SK-N-SH (cell line): ENCODE measurements at regions of chr16 and their contacts with region 1.

Region 1: DNA sequence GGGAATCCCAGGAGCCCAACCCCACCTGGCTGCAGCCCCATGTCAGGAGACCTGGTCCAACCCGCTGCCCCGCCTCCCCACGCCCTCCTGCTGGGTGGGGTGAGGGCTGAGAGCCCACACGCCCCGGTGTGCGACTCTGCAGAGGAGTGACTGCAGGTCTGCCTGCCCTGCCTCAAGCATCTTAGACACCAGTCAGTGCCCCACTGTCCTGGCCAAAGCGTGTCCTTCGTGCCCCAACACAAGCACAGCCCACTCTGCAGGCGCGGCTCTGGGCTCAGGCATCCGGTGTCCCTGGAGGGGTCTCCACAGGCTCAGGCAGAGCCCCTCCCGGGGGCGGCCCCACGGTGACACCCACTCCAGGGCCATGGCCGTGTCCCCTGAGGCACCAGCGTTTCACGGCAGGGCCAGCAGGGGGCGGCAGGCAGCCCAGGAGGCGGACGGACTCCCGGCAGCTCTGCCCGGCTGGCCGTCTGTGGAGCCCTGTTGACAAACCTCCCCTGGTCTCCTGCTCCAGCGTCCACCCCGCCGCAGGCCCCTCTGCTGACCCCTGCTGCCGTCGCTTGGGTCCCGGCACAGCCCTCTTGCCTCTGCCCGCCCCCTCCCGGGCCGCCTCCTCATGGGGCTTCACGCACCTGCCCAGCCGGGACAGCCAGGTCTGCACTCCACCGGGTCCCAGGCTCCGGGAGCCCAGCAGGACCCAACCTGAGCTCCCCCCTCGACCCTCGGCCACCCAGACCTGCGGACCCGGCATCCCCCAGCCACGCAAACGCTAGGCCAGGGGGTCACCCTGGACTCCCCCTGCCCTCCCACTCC is 8.6 kb upstream of the UBE2I start:
- DNase-seq: peak; percentile 91
- H3K4me3 ChIP-seq: peak overlapping the region; percentile 23 to 45; a peak in 2 of 4 replicates
- H3K27ac ChIP-seq: no peak overlapping the region
- H3K4me1 ChIP-seq: 0 out of 4 replicates have a peak, but pooled peaks cover 0 to 3% of the 10 kb centered on the region in 2 experiments
- H3K27me3 ChIP-seq: peaks cover 17% of the 10 kb centered on the region; the same call in 1 of the 2 replicates
- CTCF ChIP-seq: peak; percentile 73
- EP300 ChIP-seq: no peak
- RAD21 ChIP-seq: peak; percentile 42

Region 2: GRCh38 chr16:1279945-1280589 is 20.8 kb before region 1 on chr16:
- CTCF ChIA-PET with region 1: interaction called, 15 read pairs
- POLR2A ChIA-PET with region 1: no interaction called
- DNase-seq: no peak
- H3K4me3 ChIP-seq: no peak overlapping the region
- H3K27ac ChIP-seq: no peak overlapping the region
- H3K4me1 ChIP-seq: no peaks in the 10 kb centered on the region; a peak in 1 of 4 replicates
- H3K27me3 ChIP-seq: peaks cover 86% of the 10 kb centered on the region
- CTCF ChIP-seq: no peak
- EP300 ChIP-seq: no peak
- RAD21 ChIP-seq: no peak

Region 3: DNA sequence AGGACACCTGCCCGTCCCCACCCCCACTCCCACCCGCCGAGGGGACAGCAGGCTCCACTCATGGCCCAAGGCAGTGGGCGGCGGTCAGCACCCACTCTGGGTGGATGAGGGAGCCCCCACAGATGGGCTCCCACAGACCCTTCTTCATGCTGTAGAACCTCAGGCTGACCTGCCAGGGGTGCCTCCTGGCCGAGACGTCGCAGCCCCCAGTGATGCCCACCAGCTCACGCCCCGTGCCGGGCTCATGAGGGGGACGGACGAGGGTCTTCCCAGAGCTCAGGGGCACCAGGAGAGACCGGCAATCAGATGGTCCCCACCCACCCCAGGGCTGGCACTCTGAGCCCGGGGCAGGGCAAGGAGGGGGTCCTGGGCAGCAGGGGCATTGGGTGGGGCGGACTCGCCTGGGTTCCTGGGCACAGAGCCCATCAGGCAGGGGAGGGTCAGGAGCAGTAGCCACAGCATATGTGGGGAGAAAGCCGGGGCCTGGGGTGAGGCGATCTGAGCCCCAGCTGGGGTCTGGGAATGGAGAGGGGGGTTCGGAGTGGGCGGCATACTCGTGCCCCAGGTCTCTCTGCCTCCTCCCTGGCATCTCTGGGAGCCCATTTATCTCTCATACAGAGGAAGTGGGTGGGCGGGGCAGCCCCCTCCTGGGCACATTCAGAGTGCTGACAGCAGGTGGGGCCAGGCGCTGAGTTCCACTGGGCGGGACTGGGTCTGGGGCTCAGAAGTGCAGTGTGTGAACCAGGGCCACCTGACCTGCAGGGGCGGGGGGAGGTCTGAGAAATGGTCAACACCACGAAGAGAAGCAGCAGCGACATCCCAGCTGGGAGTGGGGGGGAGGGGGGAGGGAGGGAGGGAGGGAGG is 12.0 kb before region 1 on chr16:
- CTCF ChIA-PET with region 1: interaction called, 60 read pairs
- POLR2A ChIA-PET with region 1: no interaction called
- DNase-seq: no peak
- H3K4me3 ChIP-seq: no peak overlapping the region
- H3K27ac ChIP-seq: no peak overlapping the region
- H3K4me1 ChIP-seq: peaks cover 0 to 8% of the 10 kb centered on the region in 2 experiments; a peak in 1 of 4 replicates
- H3K27me3 ChIP-seq: peaks cover 71% of the 10 kb centered on the region
- CTCF ChIP-seq: no peak
- EP300 ChIP-seq: no peak
- RAD21 ChIP-seq: no peak